ENCODE measurements at regions of chr17 and their contacts with region 1.

Region 1: DNA sequence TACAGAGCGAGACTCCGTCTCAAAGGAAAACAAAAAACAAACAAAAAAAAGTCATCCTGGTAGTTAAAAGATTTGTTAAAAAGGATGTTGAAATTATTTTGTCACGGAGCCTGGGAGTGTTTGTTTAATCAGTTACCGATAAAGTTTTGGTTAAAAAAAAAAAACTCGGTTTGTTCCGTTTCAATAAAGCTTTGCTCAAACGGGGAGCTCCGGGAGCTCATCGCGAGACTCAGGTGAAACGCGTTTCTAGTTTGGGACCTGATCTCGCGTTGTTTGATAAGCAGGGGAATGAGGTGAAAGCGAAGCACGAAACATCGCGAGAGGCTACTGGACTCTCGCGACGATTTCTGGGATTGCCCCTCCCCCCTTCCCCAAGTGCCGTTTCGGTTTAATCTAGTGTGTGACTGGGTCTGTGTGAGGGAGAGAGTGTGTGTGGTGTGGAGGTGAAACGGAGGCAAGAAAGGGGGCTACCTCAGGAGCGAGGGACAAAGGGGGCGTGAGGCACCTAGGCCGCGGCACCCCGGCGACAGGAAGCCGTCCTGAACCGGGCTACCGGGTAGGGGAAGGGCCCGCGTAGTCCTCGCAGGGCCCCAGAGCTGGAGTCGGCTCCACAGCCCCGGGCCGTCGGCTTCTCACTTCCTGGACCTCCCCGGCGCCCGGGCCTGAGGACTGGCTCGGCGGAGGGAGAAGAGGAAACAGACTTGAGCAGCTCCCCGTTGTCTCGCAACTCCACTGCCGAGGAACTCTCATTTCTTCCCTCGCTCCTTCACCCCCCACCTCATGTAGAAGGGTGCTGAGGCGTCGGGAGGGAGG is at the start of gene CDK12:
- DNase-seq: peak; percentile 87
- ATAC-seq: peak; percentile 87
- H3K4me3 Mint-ChIP-seq: peak within 1 kb of the TSS; percentile 97
- H3K27ac Mint-ChIP-seq: peak within 1 kb of the TSS; percentile 98
- H3K4me1 Mint-ChIP-seq: peaks cover 50% of the 10 kb centered on the region
- H3K27me3 Mint-ChIP-seq: no peaks in the 10 kb centered on the region
- CTCF ChIP-seq: no peak
- total RNA-seq, gene CDK12: 100 and 118 TPM in 2 replicates

Region 2: GRCh38 chr17:39325528-39326240 is 135.6 kb before region 1 on chr17:
- CTCF ChIA-PET with region 1: no interaction called
- POLR2A ChIA-PET with region 1: no interaction called
- intact Hi-C with region 1: no loop called
- DNase-seq: no peak
- ATAC-seq: no peak
- H3K4me3 Mint-ChIP-seq: no peak overlapping the region
- H3K27ac Mint-ChIP-seq: peak overlapping the region; percentile 63
- H3K4me1 Mint-ChIP-seq: peaks cover 17% of the 10 kb centered on the region
- H3K27me3 Mint-ChIP-seq: no peaks in the 10 kb centered on the region
- CTCF ChIP-seq: no peak

Region 3: GRCh38 chr17:39450847-39451581 is 10.3 kb before region 1 on chr17 and contains the start of gene MED1:
- CTCF ChIA-PET with region 1: interaction called, 5 read pairs
- POLR2A ChIA-PET with region 1: interaction called, 253 read pairs
- intact Hi-C with region 1: loop called (anchors 1 kb)
- DNase-seq: peak; percentile 76
- ATAC-seq: peak; percentile 97
- H3K4me3 Mint-ChIP-seq: peak within 1 kb of the TSS; percentile 98
- H3K27ac Mint-ChIP-seq: peak within 1 kb of the TSS; percentile 96
- H3K4me1 Mint-ChIP-seq: peaks cover 28% of the 10 kb centered on the region
- H3K27me3 Mint-ChIP-seq: no peaks in the 10 kb centered on the region
- CTCF ChIP-seq: no peak
- total RNA-seq, gene MED1: 59.2 and 64.3 TPM in 2 replicates

Region 4: DNA sequence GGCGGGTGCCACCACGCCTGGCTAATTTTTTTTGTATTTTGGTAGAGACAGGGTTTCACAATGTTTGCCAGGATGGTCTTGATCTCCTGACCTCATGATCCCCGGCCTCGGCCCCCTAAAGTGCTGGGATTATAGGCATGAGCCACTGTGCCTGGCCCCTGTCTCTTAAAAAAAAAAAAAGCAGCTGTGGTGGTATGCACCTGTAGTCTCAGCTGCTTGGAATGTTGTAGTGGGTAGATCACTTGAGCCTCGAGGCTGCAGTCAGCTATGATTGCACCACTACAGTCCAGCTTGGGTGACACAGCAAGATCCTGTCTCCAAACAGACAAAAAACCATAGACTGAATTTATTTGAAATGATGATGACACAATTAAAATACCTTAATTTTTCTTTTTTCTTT is 24.2 kb after region 1 on chr17:
- CTCF ChIA-PET with region 1: no interaction called
- POLR2A ChIA-PET with region 1: interaction called, 17 read pairs
- intact Hi-C with region 1: loop called (anchors 2 kb)
- DNase-seq: no peak
- ATAC-seq: no peak
- H3K4me3 Mint-ChIP-seq: no peak overlapping the region
- H3K27ac Mint-ChIP-seq: no peak overlapping the region
- H3K4me1 Mint-ChIP-seq: peaks cover 18% of the 10 kb centered on the region
- H3K27me3 Mint-ChIP-seq: no peaks in the 10 kb centered on the region
- CTCF ChIP-seq: no peak

Region 5: DNA sequence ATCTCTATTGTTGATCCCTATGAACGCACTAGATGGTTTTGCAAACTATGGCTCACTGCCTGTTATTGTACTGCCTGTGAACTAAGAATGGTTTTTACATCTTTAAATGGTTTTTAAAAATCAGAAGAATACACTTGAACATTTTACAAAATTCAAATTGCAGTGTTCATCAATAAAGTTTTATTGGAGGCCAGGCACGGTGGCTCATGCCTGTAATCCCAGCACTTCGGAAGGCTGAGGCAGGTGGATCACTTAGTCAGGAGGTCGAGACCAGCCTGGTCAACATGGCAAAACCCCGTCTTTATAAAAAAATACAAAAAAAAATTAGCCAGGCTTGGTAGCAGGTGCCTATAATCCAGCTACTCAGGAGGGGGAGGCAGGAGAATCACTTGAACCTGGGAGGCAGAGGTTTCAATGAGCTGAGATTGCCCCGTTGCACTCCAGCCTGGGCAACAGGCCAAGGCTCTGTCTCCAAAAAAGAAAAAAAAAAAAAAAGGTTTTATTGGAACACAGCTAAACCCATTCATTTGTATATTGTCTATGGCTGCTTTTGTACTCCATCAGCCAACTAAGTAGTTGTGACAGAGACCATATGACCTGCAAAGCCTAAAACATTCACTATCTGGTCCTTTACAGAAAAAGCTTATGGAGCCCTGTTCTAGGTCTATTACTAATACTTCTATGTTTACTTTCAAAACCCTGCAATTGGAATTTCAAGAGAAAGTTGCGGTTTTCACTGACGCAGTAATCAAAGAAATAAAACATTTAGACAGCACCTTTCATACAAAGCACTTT is 383.9 kb after region 1 on chr17:
- CTCF ChIA-PET with region 1: no interaction called
- POLR2A ChIA-PET with region 1: no interaction called
- intact Hi-C with region 1: no loop called
- DNase-seq: no peak
- ATAC-seq: no peak
- H3K4me3 Mint-ChIP-seq: no peak overlapping the region
- H3K27ac Mint-ChIP-seq: peak overlapping the region; percentile 3
- H3K4me1 Mint-ChIP-seq: peaks cover 80% of the 10 kb centered on the region
- H3K27me3 Mint-ChIP-seq: no peaks in the 10 kb centered on the region
- CTCF ChIP-seq: no peak